Heart left ventricle (tissue), 16 donors: ENCODE measurements at regions of chr1 and their contacts with region 1.

Region 1: GRCh38 chr1:81800695-81801650 is at the start of gene ADGRL2:
- DNase-seq: peak; percentile 77 to 89 (median 88)
- ATAC-seq: peak; percentile 86 to 91 (median 89)
- H3K4me3 ChIP-seq: peak within 1 kb of the TSS; percentile 65 to 98 (median 92)
- H3K27ac ChIP-seq: peak within 1 kb of the TSS; percentile 96 to 98 (median 98)
- H3K4me1 ChIP-seq: peaks cover 0 to 29% (median 17%) of the 10 kb centered on the region in 12 donors
- H3K27me3 ChIP-seq: peaks cover 0 to 25% (median 0%) of the 10 kb centered on the region in 9 donors
- CTCF ChIP-seq: no peak
- POLR2A ChIP-seq: peak in 1 of 2 donors; percentile 59
- total RNA-seq, gene ADGRL2: 49.7 to 82.8 (median 58.4) TPM

Region 2: GRCh38 chr1:81254560-81254959 is 546.4 kb before region 1 on chr1:
- intact Hi-C with region 1: no loop called
- DNase-seq: no peak
- ATAC-seq: no peak
- H3K4me3 ChIP-seq: no peak overlapping the region
- H3K27ac ChIP-seq: no peak overlapping the region
- H3K4me1 ChIP-seq: no peaks in the 10 kb centered on the region
- H3K27me3 ChIP-seq: no peaks in the 10 kb centered on the region
- CTCF ChIP-seq: peak in 1 of 12 donors; percentile 11
- POLR2A ChIP-seq: no peak

Region 3: DNA sequence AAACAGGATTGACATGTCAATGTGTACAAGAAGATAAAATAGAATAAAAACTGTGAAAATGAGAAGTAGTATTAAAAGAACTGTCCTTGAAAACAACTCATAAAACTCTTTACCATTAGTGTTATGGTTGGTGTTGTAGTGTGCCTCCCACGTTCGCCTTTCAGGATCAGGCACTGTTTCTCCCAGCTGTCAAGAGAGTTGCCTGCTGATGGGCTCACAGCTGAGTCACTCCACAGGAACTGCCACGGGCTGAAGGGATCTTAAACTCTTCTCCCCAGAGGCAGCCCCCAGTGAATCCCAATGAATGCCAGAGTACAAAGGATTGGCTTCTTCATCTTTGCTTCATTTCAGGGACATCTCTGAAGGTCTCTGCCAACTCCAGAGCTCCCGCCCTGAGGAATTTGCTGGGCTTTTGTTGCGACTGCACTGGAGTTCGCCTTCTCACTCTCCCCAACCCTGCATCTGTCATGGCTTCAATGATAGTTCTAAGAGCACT is 119.3 kb after region 1 on chr1:
- intact Hi-C with region 1: loop called in 2 of 10 experiments (anchors 5 to 10 kb)
- DNase-seq: peak in 4 of 5 donors; percentile 21 to 66 (median 32)
- ATAC-seq: peak; percentile 80 to 95 (median 90)
- H3K4me3 ChIP-seq: peak overlapping the region in 6 of 12 donors; percentile 6 to 29 (median 13)
- H3K27ac ChIP-seq: peak overlapping the region in 8 of 12 donors; percentile 18 to 47 (median 34)
- H3K4me1 ChIP-seq: peaks cover 0 to 51% (median 24%) of the 10 kb centered on the region in 12 donors
- H3K27me3 ChIP-seq: no peaks in the 10 kb centered on the region
- CTCF ChIP-seq: no peak
- POLR2A ChIP-seq: no peak

Region 4: DNA sequence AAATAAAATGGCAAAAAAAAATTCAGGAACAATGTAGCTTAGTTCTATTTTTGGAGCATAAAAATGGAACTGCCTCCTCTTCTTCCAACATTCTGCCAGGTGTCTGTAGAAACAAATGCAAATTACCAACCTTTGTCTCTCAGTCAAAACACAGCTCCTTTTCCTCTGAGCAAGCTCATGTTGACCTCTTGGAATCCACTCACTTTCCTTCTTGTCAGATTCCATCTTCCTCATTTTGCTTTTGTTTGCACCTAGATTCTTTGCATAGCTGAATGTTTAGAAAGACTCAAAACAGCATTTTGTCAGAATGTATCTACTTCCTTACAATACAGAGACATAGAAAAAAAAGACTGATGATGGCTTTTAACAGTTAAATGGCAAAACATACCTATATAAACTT is 178.0 kb after region 1 on chr1:
- intact Hi-C with region 1: loop called in 6 of 10 experiments (anchors 10 kb)
- DNase-seq: no peak
- ATAC-seq: no peak
- H3K4me3 ChIP-seq: no peak overlapping the region
- H3K27ac ChIP-seq: no peak overlapping the region
- H3K4me1 ChIP-seq: peaks cover 0 to 15% (median 8%) of the 10 kb centered on the region in 12 donors
- H3K27me3 ChIP-seq: no peaks in the 10 kb centered on the region
- CTCF ChIP-seq: no peak
- POLR2A ChIP-seq: no peak

Region 5: GRCh38 chr1:81989524-81989923 is 188.6 kb after region 1 on chr1:
- intact Hi-C with region 1: loop called in 1 of 10 experiments (anchors 10 kb)
- DNase-seq: no peak
- ATAC-seq: no peak
- H3K4me3 ChIP-seq: no peak overlapping the region
- H3K27ac ChIP-seq: no peak overlapping the region
- H3K4me1 ChIP-seq: no peaks in the 10 kb centered on the region
- H3K27me3 ChIP-seq: no peaks in the 10 kb centered on the region
- CTCF ChIP-seq: no peak
- POLR2A ChIP-seq: no peak

Region 6: GRCh38 chr1:82059959-82060358 is 259.0 kb after region 1 on chr1:
- intact Hi-C with region 1: no loop called
- DNase-seq: no peak
- ATAC-seq: no peak
- H3K4me3 ChIP-seq: no peak overlapping the region
- H3K27ac ChIP-seq: no peak overlapping the region
- H3K4me1 ChIP-seq: no peaks in the 10 kb centered on the region
- H3K27me3 ChIP-seq: no peaks in the 10 kb centered on the region
- CTCF ChIP-seq: no peak
- POLR2A ChIP-seq: no peak

Region 7: GRCh38 chr1:82110855-82111254 is 309.9 kb after region 1 on chr1:
- intact Hi-C with region 1: loop called in 1 of 10 experiments (anchors 10 kb)
- DNase-seq: no peak
- ATAC-seq: no peak
- H3K4me3 ChIP-seq: no peak overlapping the region
- H3K27ac ChIP-seq: no peak overlapping the region
- H3K4me1 ChIP-seq: peaks cover 0 to 13% (median 2%) of the 10 kb centered on the region in 12 donors
- H3K27me3 ChIP-seq: no peaks in the 10 kb centered on the region
- CTCF ChIP-seq: no peak
- POLR2A ChIP-seq: no peak